ENCODE measurements at regions of chr12 and their contacts with region 1.

Region 1: GRCh38 chr12:79555028-79555930 is 135.5 kb downstream of the PAWR start:
- DNase-seq: no peak
- H3K4me3 ChIP-seq: no peak overlapping the region
- H3K27ac ChIP-seq: no peak overlapping the region
- H3K4me1 ChIP-seq: peaks cover 0 to 10% (median 8%) of the 10 kb centered on the region in 6 donors
- H3K27me3 ChIP-seq: no peaks in the 10 kb centered on the region
- CTCF ChIP-seq: peak in 8 of 11 experiments; percentile 9 to 45 (median 22)
- POLR2A ChIP-seq: no peak

Region 2: GRCh38 chr12:79689061-79690015 is 134.1 kb after region 1 on chr12:
- intact Hi-C with region 1: no loop called
- DNase-seq: peak; percentile 91
- H3K4me3 ChIP-seq: peak overlapping the region; percentile 83 to 95 (median 90)
- H3K27ac ChIP-seq: peak overlapping the region; percentile 68 to 84 (median 76)
- H3K4me1 ChIP-seq: peaks cover 10 to 59% (median 36%) of the 10 kb centered on the region in 6 donors
- H3K27me3 ChIP-seq: peaks cover 0 to 43% (median 18%) of the 10 kb centered on the region in 7 donors
- CTCF ChIP-seq: no peak
- POLR2A ChIP-seq: no peak

Region 3: GRCh38 chr12:79737875-79738718 is 182.8 kb after region 1 on chr12:
- intact Hi-C with region 1: loop called (anchors 5 kb)
- DNase-seq: no peak
- H3K4me3 ChIP-seq: no peak overlapping the region
- H3K27ac ChIP-seq: no peak overlapping the region
- H3K4me1 ChIP-seq: no peaks in the 10 kb centered on the region
- H3K27me3 ChIP-seq: no peaks in the 10 kb centered on the region
- CTCF ChIP-seq: peak in 10 of 11 experiments; percentile 18 to 68 (median 53)
- POLR2A ChIP-seq: no peak

Region 4: GRCh38 chr12:80186727-80187217 is 631.5 kb after region 1 on chr12:
- intact Hi-C with region 1: loop called (anchors 10 kb)
- DNase-seq: no peak
- H3K4me3 ChIP-seq: no peak overlapping the region
- H3K27ac ChIP-seq: peak overlapping the region in 7 of 8 donors; percentile 30 to 77 (median 68)
- H3K4me1 ChIP-seq: peaks cover 0 to 14% (median 6%) of the 10 kb centered on the region in 6 donors
- H3K27me3 ChIP-seq: no peaks in the 10 kb centered on the region
- CTCF ChIP-seq: peak in 10 of 11 experiments; percentile 38 to 82 (median 66)
- POLR2A ChIP-seq: no peak

Region 5: GRCh38 chr12:80269803-80270552 is 714.7 kb after region 1 on chr12:
- intact Hi-C with region 1: loop called (anchors 10 kb)
- DNase-seq: no peak
- H3K4me3 ChIP-seq: no peak overlapping the region
- H3K27ac ChIP-seq: no peak overlapping the region
- H3K4me1 ChIP-seq: peaks cover 0 to 4% (median 0%) of the 10 kb centered on the region in 6 donors
- H3K27me3 ChIP-seq: no peaks in the 10 kb centered on the region
- CTCF ChIP-seq: peak in 9 of 11 experiments; percentile 20 to 66 (median 52)
- POLR2A ChIP-seq: no peak

Measured in spleen (tissue), 13 donors.